Ascending aorta (tissue), 2 donors: ENCODE measurements at regions of chr17 and their contacts with region 1.

Region 1: GRCh38 chr17:50783193-50783660 is 15.9 kb upstream of the ANKRD40CL start:
- DNase-seq: peak in 1 of 2 donors; percentile 91
- H3K4me3 ChIP-seq: no peak overlapping the region
- H3K27ac ChIP-seq: no peak overlapping the region
- H3K4me1 ChIP-seq: peaks cover 0 to 4% of the 10 kb centered on the region in 2 donors
- H3K27me3 ChIP-seq: no peaks in the 10 kb centered on the region
- CTCF ChIP-seq: peak; percentile 98 to 100 (median 99)

Region 2: DNA sequence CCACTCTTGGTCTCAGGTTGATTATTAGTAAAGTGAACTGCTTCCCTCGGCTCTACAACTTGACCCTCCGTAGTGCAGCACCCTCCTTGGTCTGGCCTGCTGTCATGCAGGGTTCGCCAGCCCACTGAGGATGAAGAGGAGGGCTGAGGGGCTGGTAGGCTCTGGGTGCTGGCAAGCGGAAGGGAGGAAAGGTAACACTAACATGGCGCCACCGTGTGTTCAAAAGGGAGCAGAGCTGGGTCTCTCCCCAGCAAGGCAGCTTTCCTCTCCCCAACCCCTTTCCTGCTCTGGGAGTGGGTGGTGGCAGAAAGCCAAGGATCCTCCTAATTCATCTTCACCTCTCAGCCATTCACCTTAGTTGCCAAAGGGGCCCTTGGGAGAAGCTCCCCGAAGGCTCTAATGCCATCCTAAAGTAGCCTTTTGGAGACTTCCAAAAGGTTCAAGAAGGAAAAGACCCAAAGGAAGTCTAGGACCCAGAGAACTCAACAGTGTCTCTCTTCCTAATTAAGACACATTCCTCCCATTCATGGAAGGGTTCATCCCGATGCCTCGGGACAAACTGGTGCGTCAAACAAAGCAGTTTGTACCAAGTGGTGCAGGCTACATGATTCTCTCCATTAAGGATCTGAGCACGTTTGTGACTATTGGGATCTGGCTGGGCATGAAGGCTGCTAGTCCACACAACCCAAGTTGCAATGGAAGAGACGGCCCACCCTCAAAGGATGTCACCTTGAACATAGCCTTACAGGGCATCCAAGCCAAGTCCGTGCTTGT is 173.7 kb after region 1 on chr17:
- intact Hi-C with region 1: loop called (anchors 2 kb)
- DNase-seq: no peak
- H3K4me3 ChIP-seq: no peak overlapping the region
- H3K27ac ChIP-seq: peak overlapping the region; percentile 12 to 24
- H3K4me1 ChIP-seq: peaks cover 0 to 7% of the 10 kb centered on the region in 2 donors
- H3K27me3 ChIP-seq: no peaks in the 10 kb centered on the region
- CTCF ChIP-seq: peak; percentile 55 to 81 (median 70)

Region 3: GRCh38 chr17:51166197-51166986 is 383.2 kb after region 1 on chr17 and contains the start of gene NME2:
- intact Hi-C with region 1: no loop called
- DNase-seq: peak; percentile 66 to 94
- H3K4me3 ChIP-seq: peak within 1 kb of the TSS; percentile 80 to 99
- H3K27ac ChIP-seq: peak within 1 kb of the TSS; percentile 97 to 98
- H3K4me1 ChIP-seq: peaks cover 0 to 10% of the 10 kb centered on the region in 2 donors
- H3K27me3 ChIP-seq: no peaks in the 10 kb centered on the region
- CTCF ChIP-seq: no peak
- total RNA-seq, gene NME2: 638 TPM